Transverse colon (tissue), 4 donors: ENCODE measurements at regions of chr12 and their contacts with region 1.

Region 1: DNA sequence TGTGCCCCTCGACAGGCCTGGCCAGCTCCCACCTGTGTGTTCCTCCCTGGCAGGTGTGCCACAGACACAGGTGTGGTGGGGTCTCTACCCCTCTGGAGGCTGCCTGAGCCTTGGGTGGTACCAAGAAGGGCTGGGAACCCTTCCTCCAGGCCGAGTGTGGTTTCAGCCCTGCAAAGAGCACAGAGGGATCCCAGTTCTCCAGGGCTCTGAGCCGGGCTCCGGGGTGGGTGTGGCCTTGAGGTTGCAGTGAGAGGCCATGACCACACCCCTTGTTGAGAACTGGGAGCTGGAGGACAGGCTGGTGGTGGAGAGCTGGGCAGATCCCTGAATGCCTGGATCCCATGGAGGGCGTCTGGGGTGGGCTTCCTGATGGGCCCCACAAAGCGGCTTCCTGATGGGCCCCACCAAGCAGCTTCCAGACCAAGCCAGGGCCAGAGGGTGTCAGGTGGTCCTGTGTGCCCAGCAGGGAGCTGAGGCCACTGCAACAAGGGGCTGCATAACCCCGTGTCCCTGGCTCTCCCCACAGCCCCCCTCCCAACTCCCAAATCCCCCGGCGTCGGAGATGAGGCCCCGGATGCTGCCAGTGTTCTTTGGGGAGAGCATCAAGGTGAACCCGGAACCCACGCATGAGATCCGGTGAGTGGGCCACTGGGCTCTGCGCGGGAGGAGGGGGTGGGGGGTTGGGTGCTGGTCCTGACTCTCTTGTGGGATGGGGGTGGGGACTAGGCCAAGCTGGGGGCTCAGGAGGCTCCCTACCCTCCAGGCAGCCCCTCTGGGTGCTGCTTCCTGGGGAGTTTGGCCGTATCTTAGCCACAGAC is 16.6 kb downstream of the RFLNA start:
- DNase-seq: peak; percentile 43
- H3K4me3 ChIP-seq: no peak overlapping the region
- H3K27ac ChIP-seq: no peak overlapping the region
- H3K4me1 ChIP-seq: no peaks in the 10 kb centered on the region
- H3K27me3 ChIP-seq: no peaks in the 10 kb centered on the region
- CTCF ChIP-seq: no peak
- EP300 ChIP-seq: no peak
- POLR2A ChIP-seq: no peak

Region 2: GRCh38 chr12:123990511-123990910 is 321.0 kb before region 1 on chr12:
- in situ Hi-C with region 1: no loop called
- intact Hi-C with region 1: no loop called
- DNase-seq: no peak
- H3K4me3 ChIP-seq: no peak overlapping the region
- H3K27ac ChIP-seq: peak overlapping the region; percentile 15 to 41 (median 28)
- H3K4me1 ChIP-seq: peaks cover 0 to 37% (median 12%) of the 10 kb centered on the region in 4 donors
- H3K27me3 ChIP-seq: no peaks in the 10 kb centered on the region
- CTCF ChIP-seq: no peak
- EP300 ChIP-seq: no peak
- POLR2A ChIP-seq: no peak

Region 3: GRCh38 chr12:124044809-124045321 is 266.6 kb before region 1 on chr12:
- in situ Hi-C with region 1: loop called (anchors 5 to 25 kb)
- intact Hi-C with region 1: loop called (anchors 5 kb)
- DNase-seq: no peak
- H3K4me3 ChIP-seq: no peak overlapping the region
- H3K27ac ChIP-seq: no peak overlapping the region
- H3K4me1 ChIP-seq: no peaks in the 10 kb centered on the region
- H3K27me3 ChIP-seq: no peaks in the 10 kb centered on the region
- CTCF ChIP-seq: no peak
- EP300 ChIP-seq: no peak
- POLR2A ChIP-seq: no peak

Region 4: GRCh38 chr12:124125203-124125871 is 186.2 kb before region 1 on chr12:
- in situ Hi-C with region 1: no loop called
- intact Hi-C with region 1: no loop called
- DNase-seq: no peak
- H3K4me3 ChIP-seq: no peak overlapping the region
- H3K27ac ChIP-seq: no peak overlapping the region
- H3K4me1 ChIP-seq: no peaks in the 10 kb centered on the region
- H3K27me3 ChIP-seq: no peaks in the 10 kb centered on the region
- CTCF ChIP-seq: no peak
- EP300 ChIP-seq: no peak
- POLR2A ChIP-seq: no peak

Region 5: GRCh38 chr12:124347716-124348357 is 36.3 kb after region 1 on chr12:
- in situ Hi-C with region 1: no loop called
- intact Hi-C with region 1: no loop called
- DNase-seq: no peak
- H3K4me3 ChIP-seq: no peak overlapping the region
- H3K27ac ChIP-seq: no peak overlapping the region
- H3K4me1 ChIP-seq: peaks cover 4 to 8% (median 6%) of the 10 kb centered on the region in 4 donors
- H3K27me3 ChIP-seq: no peaks in the 10 kb centered on the region
- CTCF ChIP-seq: peak; percentile 46 to 53 (median 52)
- EP300 ChIP-seq: no peak
- POLR2A ChIP-seq: no peak